ENCODE measurements at regions of chr1 and their contacts with region 1.

Region 1: DNA sequence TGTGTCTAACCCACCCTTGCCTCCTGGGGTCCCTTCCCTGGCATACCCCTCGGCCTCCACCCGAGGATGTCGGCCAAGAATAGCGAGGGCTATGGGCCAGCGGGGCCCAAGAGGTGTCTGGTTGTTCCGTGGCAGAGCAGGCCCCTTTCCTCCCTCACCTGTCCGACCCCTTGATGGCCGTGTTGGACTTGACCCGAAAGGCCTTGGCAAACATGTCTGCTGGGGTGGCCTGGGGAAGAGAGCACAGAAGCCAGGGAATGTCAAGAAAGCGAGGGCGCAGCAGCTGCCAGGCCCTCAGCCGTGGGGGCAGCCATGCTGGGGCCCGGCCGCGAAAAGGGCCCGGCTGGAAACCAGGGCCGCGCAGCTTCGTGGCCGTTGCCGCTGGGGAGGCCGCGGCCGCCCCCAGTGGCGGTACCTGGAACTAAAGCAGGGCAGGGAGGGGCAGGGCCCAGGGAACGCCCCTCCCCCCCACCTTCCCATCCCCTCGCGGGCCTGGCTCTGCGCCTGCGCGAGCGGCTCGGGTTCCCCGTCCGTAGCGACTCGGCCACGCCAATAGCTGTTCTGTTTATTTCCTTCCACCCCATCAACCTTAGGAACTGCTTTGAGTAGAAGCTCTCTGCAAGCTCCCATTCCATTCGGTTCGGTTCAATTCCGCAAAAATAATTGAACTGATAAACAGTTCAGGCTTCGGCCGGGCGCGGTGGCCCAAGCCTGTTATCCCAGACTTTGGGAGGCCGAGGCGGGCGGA is at the start of gene EIF2D:
- DNase-seq: peak; percentile 95
- ATAC-seq: peak; percentile 98
- H3K4me3 Mint-ChIP-seq: peak within 1 kb of the TSS; percentile 87
- H3K27ac Mint-ChIP-seq: peak within 1 kb of the TSS; percentile 93
- H3K4me1 Mint-ChIP-seq: peaks cover 40% of the 10 kb centered on the region
- H3K27me3 Mint-ChIP-seq: peaks cover 6% of the 10 kb centered on the region
- total RNA-seq, gene EIF2D: 51.7 to 68.4 TPM

Region 2: GRCh38 chr1:206419250-206419649 is 193.1 kb before region 1 on chr1:
- CTCF ChIA-PET with region 1: no interaction called
- DNase-seq: peak; percentile 11
- ATAC-seq: no peak
- H3K4me3 Mint-ChIP-seq: no peak overlapping the region
- H3K27ac Mint-ChIP-seq: no peak overlapping the region
- H3K4me1 Mint-ChIP-seq: no peaks in the 10 kb centered on the region
- H3K27me3 Mint-ChIP-seq: no peaks in the 10 kb centered on the region

Region 3: GRCh38 chr1:206469933-206470691 is 142.2 kb before region 1 on chr1 and contains the start of gene IKBKE:
- CTCF ChIA-PET with region 1: interaction called, 13 read pairs
- DNase-seq: peak; percentile 84
- ATAC-seq: peak; percentile 72
- H3K4me3 Mint-ChIP-seq: peak within 1 kb of the TSS; percentile 91
- H3K27ac Mint-ChIP-seq: peak within 1 kb of the TSS; percentile 92
- H3K4me1 Mint-ChIP-seq: peaks cover 88% of the 10 kb centered on the region
- H3K27me3 Mint-ChIP-seq: no peaks in the 10 kb centered on the region
- total RNA-seq, gene IKBKE: 64.8 to 72.7 TPM

Region 4: GRCh38 chr1:206544562-206545257 is 67.6 kb before region 1 on chr1:
- CTCF ChIA-PET with region 1: interaction called, 15 read pairs
- DNase-seq: peak; percentile 86
- ATAC-seq: peak; percentile 92
- H3K4me3 Mint-ChIP-seq: no peak overlapping the region
- H3K27ac Mint-ChIP-seq: peak overlapping the region; percentile 28
- H3K4me1 Mint-ChIP-seq: peaks cover 13% of the 10 kb centered on the region
- H3K27me3 Mint-ChIP-seq: no peaks in the 10 kb centered on the region

Region 5: GRCh38 chr1:206556750-206557635 is 55.3 kb before region 1 on chr1:
- CTCF ChIA-PET with region 1: interaction called, 14 read pairs
- DNase-seq: peak; percentile 95
- ATAC-seq: peak; percentile 72
- H3K4me3 Mint-ChIP-seq: peak overlapping the region; percentile 98
- H3K27ac Mint-ChIP-seq: peak overlapping the region; percentile 96
- H3K4me1 Mint-ChIP-seq: peaks cover 69% of the 10 kb centered on the region
- H3K27me3 Mint-ChIP-seq: no peaks in the 10 kb centered on the region

Region 6: DNA sequence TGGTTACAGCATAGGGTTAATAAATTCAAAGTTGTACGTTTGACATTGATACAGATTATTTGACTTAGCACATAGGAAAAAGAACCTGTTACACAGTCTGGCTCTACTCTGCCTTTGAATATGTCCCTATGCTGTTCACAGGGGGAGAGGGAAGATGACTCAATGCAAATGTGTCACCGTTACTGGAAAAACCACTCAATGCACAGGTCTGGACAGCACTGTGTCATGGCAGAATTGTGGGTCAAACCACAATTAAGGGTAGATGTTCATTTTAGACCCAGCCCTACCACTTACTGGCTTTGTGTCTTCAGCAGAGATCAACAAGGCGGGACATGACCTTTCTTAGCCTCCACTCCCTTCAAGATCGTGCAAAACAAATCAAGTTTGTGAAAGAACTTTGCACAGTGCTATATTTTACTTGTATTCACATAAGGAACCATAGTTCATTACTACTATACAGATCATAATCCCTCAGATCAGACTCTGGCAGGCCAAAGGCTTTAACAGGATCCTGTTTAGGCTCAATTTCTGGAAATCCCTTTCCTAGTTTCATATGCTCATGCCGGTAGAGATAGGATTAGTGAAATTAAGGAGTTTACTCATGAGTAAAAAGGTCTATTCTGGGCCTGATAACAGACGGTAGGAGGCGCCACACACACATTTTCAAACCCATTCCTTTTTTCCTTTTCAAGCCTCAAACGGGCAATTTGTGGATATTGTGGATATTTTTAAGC is 22.1 kb before region 1 on chr1:
- CTCF ChIA-PET with region 1: interaction called, 22 read pairs
- DNase-seq: peak; percentile 91
- ATAC-seq: peak; percentile 96
- H3K4me3 Mint-ChIP-seq: peak overlapping the region; percentile 35
- H3K27ac Mint-ChIP-seq: peak overlapping the region; percentile 91
- H3K4me1 Mint-ChIP-seq: peaks cover 70% of the 10 kb centered on the region
- H3K27me3 Mint-ChIP-seq: no peaks in the 10 kb centered on the region

Region 7: GRCh38 chr1:206635080-206635977 is 23.0 kb after region 1 on chr1 and contains the start of gene DYRK3:
- CTCF ChIA-PET with region 1: interaction called, 63 read pairs
- DNase-seq: peak; percentile 96
- ATAC-seq: peak; percentile 93
- H3K4me3 Mint-ChIP-seq: peak within 1 kb of the TSS; percentile 76
- H3K27ac Mint-ChIP-seq: peak within 1 kb of the TSS; percentile 91
- H3K4me1 Mint-ChIP-seq: peaks cover 33% of the 10 kb centered on the region
- H3K27me3 Mint-ChIP-seq: peaks cover 19% of the 10 kb centered on the region
- total RNA-seq, gene DYRK3: 9.5 to 12.7 TPM

Region 8: GRCh38 chr1:206772243-206772937 is 160.1 kb after region 1 on chr1 and contains the start of gene IL10:
- CTCF ChIA-PET with region 1: no interaction called
- DNase-seq: no peak
- ATAC-seq: no peak
- H3K4me3 Mint-ChIP-seq: peak within 1 kb of the TSS; percentile 4
- H3K27ac Mint-ChIP-seq: peak within 1 kb of the TSS; percentile 0
- H3K4me1 Mint-ChIP-seq: peaks cover 64% of the 10 kb centered on the region
- H3K27me3 Mint-ChIP-seq: peaks cover 47% of the 10 kb centered on the region
- total RNA-seq, gene IL10: not detected